A673 (cell line): ENCODE measurements at regions of chr12 and their contacts with region 1.

Region 1: DNA sequence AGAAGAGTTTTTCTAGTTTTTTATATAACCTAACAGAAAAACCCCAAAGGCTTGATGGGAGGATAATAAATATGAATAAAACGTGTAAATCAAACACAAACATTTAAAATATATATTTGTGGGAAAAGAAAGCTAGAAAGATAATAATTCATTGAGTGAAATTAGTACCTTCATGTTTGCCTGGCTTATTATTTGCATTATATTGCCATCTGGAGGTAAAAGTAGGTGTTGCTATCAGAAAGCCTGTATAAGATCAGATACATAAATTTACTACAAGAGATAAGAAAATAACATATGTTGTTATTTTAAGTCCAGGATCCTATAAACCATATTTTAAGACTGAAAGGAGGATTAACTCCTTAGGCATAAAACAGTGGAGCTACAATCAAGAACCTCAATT is 77.7 kb downstream of the NTS start:
- DNase-seq: peak; percentile 66
- H3K4me3 ChIP-seq: no peak overlapping the region
- H3K27ac ChIP-seq: no peak overlapping the region
- H3K4me1 ChIP-seq: peaks cover 56% of the 10 kb centered on the region
- H3K27me3 ChIP-seq: no peaks in the 10 kb centered on the region
- CTCF ChIP-seq: peak; percentile 72

Region 2: GRCh38 chr12:86230516-86231146 is 278.8 kb after region 1 on chr12:
- CTCF ChIA-PET with region 1: no interaction called
- POLR2A ChIA-PET with region 1: no interaction called
- intact Hi-C with region 1: no loop called
- DNase-seq: no peak
- H3K4me3 ChIP-seq: no peak overlapping the region
- H3K27ac ChIP-seq: no peak overlapping the region
- H3K4me1 ChIP-seq: peaks cover 31% of the 10 kb centered on the region
- H3K27me3 ChIP-seq: no peaks in the 10 kb centered on the region
- CTCF ChIP-seq: no peak

Region 3: GRCh38 chr12:86914716-86915115 is 962.9 kb after region 1 on chr12:
- CTCF ChIA-PET with region 1: no interaction called
- POLR2A ChIA-PET with region 1: no interaction called
- intact Hi-C with region 1: loop called (anchors 10 kb)
- DNase-seq: peak; percentile 62
- H3K4me3 ChIP-seq: no peak overlapping the region
- H3K27ac ChIP-seq: no peak overlapping the region
- H3K4me1 ChIP-seq: no peaks in the 10 kb centered on the region
- H3K27me3 ChIP-seq: no peaks in the 10 kb centered on the region
- CTCF ChIP-seq: peak; percentile 67

Region 4: GRCh38 chr12:87848248-87848868 is 1896.5 kb after region 1 on chr12:
- CTCF ChIA-PET with region 1: no interaction called
- POLR2A ChIA-PET with region 1: no interaction called
- intact Hi-C with region 1: loop called (anchors 2 kb)
- DNase-seq: peak; percentile 68
- H3K4me3 ChIP-seq: no peak overlapping the region
- H3K27ac ChIP-seq: no peak overlapping the region
- H3K4me1 ChIP-seq: no peaks in the 10 kb centered on the region
- H3K27me3 ChIP-seq: no peaks in the 10 kb centered on the region
- CTCF ChIP-seq: peak; percentile 87

Region 5: GRCh38 chr12:87953256-87953860 is 2001.5 kb after region 1 on chr12:
- CTCF ChIA-PET with region 1: no interaction called
- POLR2A ChIA-PET with region 1: no interaction called
- intact Hi-C with region 1: loop called (anchors 10 kb)
- DNase-seq: peak; percentile 63
- H3K4me3 ChIP-seq: no peak overlapping the region
- H3K27ac ChIP-seq: no peak overlapping the region
- H3K4me1 ChIP-seq: no peaks in the 10 kb centered on the region
- H3K27me3 ChIP-seq: no peaks in the 10 kb centered on the region
- CTCF ChIP-seq: peak; percentile 73